Left lung (tissue), 14 donors: ENCODE measurements at regions of chr4 and their contacts with region 1.

Region 1: DNA sequence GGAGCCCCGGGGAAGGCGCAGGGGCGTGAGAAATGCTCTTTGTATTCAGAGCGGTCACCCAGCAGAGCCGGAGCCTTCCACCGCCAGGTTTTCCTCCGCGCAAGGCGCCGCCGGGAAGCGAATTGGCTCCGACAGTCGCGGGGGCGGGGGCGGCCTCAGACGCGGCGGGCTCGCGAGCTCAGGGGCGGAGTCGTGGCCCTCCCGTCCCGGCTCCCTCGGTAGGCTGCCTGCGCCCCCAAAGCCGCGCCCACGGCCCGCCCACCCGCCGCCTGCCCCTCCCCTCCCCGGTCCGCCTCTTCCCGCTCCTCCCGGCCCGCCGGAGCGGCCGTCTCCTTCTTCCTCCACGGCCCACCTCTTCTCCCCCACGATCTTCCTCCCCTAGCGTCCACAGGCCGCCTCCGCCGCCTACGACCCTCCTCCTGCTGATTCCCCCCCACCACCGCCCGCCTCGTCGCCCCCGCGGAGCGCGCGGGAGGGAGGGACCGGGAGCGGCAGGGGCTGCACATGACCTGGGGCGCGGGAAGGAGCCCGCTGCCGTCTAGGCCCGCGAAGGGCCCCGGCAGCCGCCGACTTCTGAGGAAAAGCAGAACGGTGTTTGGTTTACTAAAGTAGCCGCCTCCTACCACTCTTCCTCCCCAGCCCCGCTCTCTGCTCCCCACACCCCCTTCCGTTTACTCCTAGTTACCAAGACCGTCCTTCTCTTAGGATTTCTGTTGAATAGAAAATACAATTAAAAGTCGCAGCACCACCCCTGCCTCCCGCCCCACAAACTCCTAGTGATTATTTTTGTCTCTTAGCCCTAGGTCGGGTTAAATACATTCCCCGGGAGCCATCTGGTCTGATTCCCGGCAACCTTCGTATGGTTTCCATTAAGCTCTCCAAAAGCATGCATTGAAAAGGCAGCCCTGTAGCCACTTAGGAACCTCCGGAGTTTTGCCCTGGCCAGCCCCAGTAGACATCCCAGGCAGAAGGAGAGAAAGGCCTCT is 53.2 kb downstream of the C4orf51 start:
- DNase-seq: peak; percentile 89 to 97 (median 94)
- ATAC-seq: peak; percentile 93
- H3K4me3 ChIP-seq: peak overlapping the region; percentile 48 to 56
- H3K27ac ChIP-seq: peak overlapping the region; percentile 89 to 98
- H3K4me1 ChIP-seq: peaks cover 16 to 47% of the 10 kb centered on the region in 2 donors
- H3K27me3 ChIP-seq: no peaks in the 10 kb centered on the region
- CTCF ChIP-seq: no peak

Region 2: GRCh38 chr4:145618932-145619638 is 114.1 kb before region 1 on chr4 and contains the start of gene MMAA:
- intact Hi-C with region 1: loop called in 1 of 2 experiments (anchors 10 kb)
- DNase-seq: peak; percentile 94 to 99 (median 96)
- ATAC-seq: peak; percentile 99
- H3K4me3 ChIP-seq: peak within 1 kb of the TSS; percentile 72 to 74
- H3K27ac ChIP-seq: peak within 1 kb of the TSS; percentile 93 to 94
- H3K4me1 ChIP-seq: peaks cover 6 to 38% of the 10 kb centered on the region in 2 donors
- H3K27me3 ChIP-seq: no peaks in the 10 kb centered on the region
- CTCF ChIP-seq: peak; percentile 48 to 51
- polyA plus RNA-seq, gene MMAA: 6.5 to 8.7 (median 7.7) TPM

Region 3: GRCh38 chr4:146087856-146088255 is 354.7 kb after region 1 on chr4:
- intact Hi-C with region 1: no loop called
- DNase-seq: no peak
- ATAC-seq: no peak
- H3K4me3 ChIP-seq: no peak overlapping the region
- H3K27ac ChIP-seq: no peak overlapping the region
- H3K4me1 ChIP-seq: no peaks in the 10 kb centered on the region
- H3K27me3 ChIP-seq: no peaks in the 10 kb centered on the region
- CTCF ChIP-seq: no peak